Activated T-helper 2 cell treated with anti-CD3 and anti-CD28 coated beads, Interferon-gamma antibody, Interleukin-2, Interleukin-4, amounts not matched to agents 10 μg/mL and 5 μg/mL and 100 μg/mL, durations not matched to agents 14 hours and 24 hours and 36 hours (primary cell): ENCODE measurements at regions of chrX and their contacts with region 1.

Region 1: GRCh38 chrX:47144626-47145394 is at the starts of genes NDUFB11 and RBM10:
- DNase-seq: peak; percentile 91
- H3K4me3 Mint-ChIP-seq: peak within 1 kb of the TSS; percentile 99
- H3K27ac Mint-ChIP-seq: peak within 1 kb of the TSS; percentile 100
- H3K4me1 Mint-ChIP-seq: peaks cover 19% of the 10 kb centered on the region
- H3K27me3 Mint-ChIP-seq: no peaks in the 10 kb centered on the region
- total RNA-seq, gene NDUFB11: 91.7 and 98.8 TPM in 2 replicates
- total RNA-seq, gene RBM10: 65.7 and 69.2 TPM in 2 replicates

Region 2: GRCh38 chrX:47129157-47129898 is 15.5 kb before region 1 on chrX:
- intact Hi-C with region 1: loop called (anchors 1 kb)
- DNase-seq: peak; percentile 89
- H3K4me3 Mint-ChIP-seq: peak overlapping the region; percentile 98
- H3K27ac Mint-ChIP-seq: peak overlapping the region; percentile 98
- H3K4me1 Mint-ChIP-seq: peaks cover 6% of the 10 kb centered on the region
- H3K27me3 Mint-ChIP-seq: no peaks in the 10 kb centered on the region

Region 3: DNA sequence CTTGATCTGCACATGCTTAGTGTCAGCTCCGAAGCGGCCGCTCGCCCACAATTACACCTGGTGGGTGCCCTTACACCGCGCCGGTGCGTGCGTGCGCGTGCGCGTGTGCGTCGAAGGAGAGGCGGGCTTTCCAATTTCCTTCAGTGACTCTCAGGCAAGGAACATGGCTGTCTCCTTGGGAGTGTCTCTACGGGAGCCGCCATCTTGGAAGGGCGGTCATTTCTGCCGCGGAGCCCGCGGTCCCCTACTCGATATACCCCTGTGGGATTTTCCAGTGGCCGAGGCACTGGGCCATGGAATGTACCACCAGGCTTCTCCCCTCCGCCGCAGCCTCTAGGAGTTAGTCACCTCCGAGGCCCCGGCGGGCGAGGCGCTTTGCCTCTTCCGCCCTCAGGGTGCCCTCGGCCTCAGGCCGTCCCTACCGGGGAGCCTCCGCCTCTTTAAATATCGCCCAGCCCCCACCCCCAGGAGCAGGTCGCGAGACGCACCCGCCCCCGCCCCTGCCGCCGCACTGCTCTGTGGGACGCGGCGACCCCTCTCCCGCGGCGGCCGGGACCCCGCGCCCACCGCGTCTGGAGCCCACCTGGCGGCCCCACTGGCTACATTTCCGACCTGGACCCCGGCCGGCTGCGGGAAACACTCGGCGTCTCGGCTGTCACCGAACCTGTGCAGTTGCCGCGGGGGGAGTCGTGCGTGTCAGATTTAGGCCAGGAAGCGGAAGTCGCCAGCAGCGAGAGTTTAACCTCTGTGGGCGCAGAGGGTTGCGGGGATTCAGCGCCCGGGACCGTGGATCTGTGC is 337.9 kb after region 1 on chrX and contains the start of gene ZNF41:
- intact Hi-C with region 1: loop called (anchors 1 kb)
- DNase-seq: peak; percentile 63
- H3K4me3 Mint-ChIP-seq: peak within 1 kb of the TSS; percentile 89
- H3K27ac Mint-ChIP-seq: peak within 1 kb of the TSS; percentile 90
- H3K4me1 Mint-ChIP-seq: peaks cover 25% of the 10 kb centered on the region
- H3K27me3 Mint-ChIP-seq: no peaks in the 10 kb centered on the region
- total RNA-seq, gene ZNF41: 8.7 and 9.7 TPM in 2 replicates